Calu3 (cell line): ENCODE measurements at regions of chr3 and their contacts with region 1.

Region 1: GRCh38 chr3:195748661-195749060 is 27.9 kb downstream of the MUC20 start:
- DNase-seq: no peak
- H3K4me3 Mint-ChIP-seq: no peak overlapping the region
- H3K27ac Mint-ChIP-seq: no peak overlapping the region
- H3K4me1 Mint-ChIP-seq: no peaks in the 10 kb centered on the region
- H3K27me3 Mint-ChIP-seq: no peaks in the 10 kb centered on the region
- CTCF ChIP-seq: no peak

Region 2: DNA sequence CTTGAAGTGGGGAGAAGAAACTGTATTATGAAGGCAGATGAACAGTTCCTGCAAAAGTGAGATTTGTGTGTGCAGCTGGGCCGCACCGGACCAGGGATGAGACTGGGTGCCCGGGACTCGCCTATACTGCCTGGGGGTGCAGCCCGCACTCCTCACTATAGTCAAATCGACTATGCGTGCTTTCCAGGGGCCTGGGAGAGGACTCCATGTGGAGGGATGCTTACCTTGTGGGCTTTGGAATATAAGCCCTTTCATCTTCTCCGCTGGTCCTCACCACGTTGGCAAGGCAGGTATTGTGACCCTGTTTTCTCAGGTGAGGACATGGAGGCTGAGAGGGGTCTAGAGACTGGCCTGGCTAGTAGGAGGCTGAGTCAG is 132.0 kb before region 1 on chr3:
- CTCF ChIA-PET with region 1: no interaction called
- intact Hi-C with region 1: loop called (anchors 10 kb)
- DNase-seq: no peak
- H3K4me3 Mint-ChIP-seq: no peak overlapping the region
- H3K27ac Mint-ChIP-seq: no peak overlapping the region
- H3K4me1 Mint-ChIP-seq: no peaks in the 10 kb centered on the region
- H3K27me3 Mint-ChIP-seq: peaks cover 16% of the 10 kb centered on the region
- CTCF ChIP-seq: no peak

Region 3: GRCh38 chr3:195727606-195728195 is 21.0 kb before region 1 on chr3:
- CTCF ChIA-PET with region 1: no interaction called
- intact Hi-C with region 1: loop called (anchors 2 kb)
- DNase-seq: no peak
- H3K4me3 Mint-ChIP-seq: no peak overlapping the region
- H3K27ac Mint-ChIP-seq: no peak overlapping the region
- H3K4me1 Mint-ChIP-seq: no peaks in the 10 kb centered on the region
- H3K27me3 Mint-ChIP-seq: no peaks in the 10 kb centered on the region
- CTCF ChIP-seq: no peak